ENCODE measurements at regions of chr16 and their contacts with region 1.

Region 1: GRCh38 chr16:15765880-15766279 is 90.9 kb downstream of the MYH11 start:
- DNase-seq: no peak
- ATAC-seq: peak; percentile 76

Region 2: DNA sequence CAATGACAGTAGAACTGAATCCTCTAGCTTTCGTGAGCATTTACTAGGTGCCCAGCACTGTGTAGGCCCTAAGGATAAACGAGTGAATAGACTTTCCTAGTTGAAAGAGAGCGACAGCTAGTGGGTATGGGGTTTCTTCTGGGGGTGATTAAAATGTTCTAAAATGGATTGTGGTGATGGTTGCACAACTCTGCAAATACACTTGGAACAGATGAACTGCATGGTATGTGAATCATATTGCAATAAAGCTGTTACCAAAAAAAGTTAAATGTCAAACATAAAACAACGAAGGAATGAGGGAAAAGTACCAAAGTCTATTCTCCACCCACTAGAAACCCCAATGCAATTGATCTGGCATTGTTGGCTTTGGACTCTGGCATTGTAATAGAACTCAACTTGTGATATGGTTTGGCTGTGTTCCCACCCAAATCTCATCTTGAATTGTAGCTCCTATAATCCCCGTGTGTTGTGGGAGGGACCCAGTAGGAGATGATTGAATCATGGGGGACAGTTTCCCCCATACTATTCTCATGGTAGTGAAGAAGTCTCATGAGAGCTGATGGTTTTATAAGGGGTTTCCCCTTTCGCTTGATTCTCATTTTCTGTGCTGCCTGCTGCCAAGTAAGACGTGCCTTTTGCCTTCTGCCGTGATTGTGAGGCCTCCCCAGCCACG is 193.4 kb before region 1 on chr16:
- intact Hi-C with region 1: no loop called
- DNase-seq: no peak
- ATAC-seq: no peak

Region 3: GRCh38 chr16:15672514-15673167 is 93.2 kb before region 1 on chr16:
- intact Hi-C with region 1: no loop called
- DNase-seq: peak; percentile 95
- ATAC-seq: peak; percentile 99

Region 4: GRCh38 chr16:15690296-15690695 is 75.6 kb before region 1 on chr16:
- intact Hi-C with region 1: no loop called
- DNase-seq: no peak
- ATAC-seq: no peak

Region 5: GRCh38 chr16:15811481-15812400 is 45.9 kb after region 1 on chr16:
- intact Hi-C with region 1: no loop called
- DNase-seq: no peak
- ATAC-seq: peak; percentile 80

Region 6: DNA sequence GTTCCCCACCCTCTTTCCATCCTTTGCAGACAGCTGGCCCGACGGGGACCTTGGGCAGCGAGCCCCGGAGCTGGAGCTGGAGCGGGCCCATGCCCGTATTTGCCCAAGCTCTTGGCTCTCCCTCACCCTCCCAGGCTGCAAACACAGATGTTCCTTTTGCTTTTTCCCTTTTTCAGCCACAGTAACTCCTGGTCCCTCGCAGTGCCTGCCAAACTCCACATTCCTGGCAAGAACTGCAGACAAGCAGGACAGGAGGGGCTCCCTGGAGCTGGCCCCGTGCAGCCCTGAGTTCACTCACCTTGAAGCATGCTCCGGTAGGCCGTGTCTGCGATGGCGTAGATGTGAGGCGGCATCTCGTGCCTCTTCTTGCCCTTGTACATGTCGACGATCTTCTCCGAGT is 57.1 kb after region 1 on chr16:
- intact Hi-C with region 1: loop called (anchors 2 kb)
- DNase-seq: no peak
- ATAC-seq: no peak

Region 7: GRCh38 chr16:16127469-16128116 is 361.7 kb after region 1 on chr16:
- intact Hi-C with region 1: loop called (anchors 5 kb)
- DNase-seq: no peak
- ATAC-seq: peak; percentile 82

Measured in Right ventricle myocardium inferior (tissue), 1 donor.